Right ventricle myocardium inferior (tissue), 1 donor: ENCODE measurements at regions of chr3 and their contacts with region 1.

Region 1: GRCh38 chr3:139677388-139678155 is at the start of gene NMNAT3:
- DNase-seq: peak; percentile 94
- ATAC-seq: peak; percentile 99
- total RNA-seq, gene NMNAT3: 11.0 TPM

Region 2: DNA sequence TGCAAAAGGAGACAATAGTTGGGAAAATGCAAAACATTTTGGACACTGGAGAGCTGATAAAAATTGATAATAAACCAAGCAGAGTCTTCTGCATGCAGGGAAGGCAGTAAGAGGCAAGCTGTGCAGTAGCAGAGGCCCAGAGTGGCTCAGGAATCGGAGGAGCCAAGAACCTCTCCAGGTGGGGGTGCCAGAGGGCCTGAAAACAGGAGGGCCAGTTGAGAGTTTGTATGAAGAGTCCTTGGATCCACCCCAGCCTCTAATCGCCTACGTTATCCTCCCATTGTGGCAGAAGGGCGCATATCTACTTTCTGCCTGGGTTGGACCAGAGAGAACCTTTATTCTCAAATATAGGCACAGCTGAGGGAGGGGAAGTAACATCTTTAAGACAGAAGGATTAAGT is 89.1 kb before region 1 on chr3:
- intact Hi-C with region 1: loop called (anchors 10 kb)
- DNase-seq: no peak
- ATAC-seq: peak; percentile 56

Region 3: GRCh38 chr3:139935016-139935865 is 257.7 kb after region 1 on chr3 and contains the start of gene CLSTN2:
- intact Hi-C with region 1: no loop called
- DNase-seq: peak; percentile 91
- ATAC-seq: peak; percentile 91
- total RNA-seq, gene CLSTN2: 8.4 TPM